Ascending aorta (tissue), 2 donors: ENCODE measurements at regions of chr1 and their contacts with region 1.

Region 1: DNA sequence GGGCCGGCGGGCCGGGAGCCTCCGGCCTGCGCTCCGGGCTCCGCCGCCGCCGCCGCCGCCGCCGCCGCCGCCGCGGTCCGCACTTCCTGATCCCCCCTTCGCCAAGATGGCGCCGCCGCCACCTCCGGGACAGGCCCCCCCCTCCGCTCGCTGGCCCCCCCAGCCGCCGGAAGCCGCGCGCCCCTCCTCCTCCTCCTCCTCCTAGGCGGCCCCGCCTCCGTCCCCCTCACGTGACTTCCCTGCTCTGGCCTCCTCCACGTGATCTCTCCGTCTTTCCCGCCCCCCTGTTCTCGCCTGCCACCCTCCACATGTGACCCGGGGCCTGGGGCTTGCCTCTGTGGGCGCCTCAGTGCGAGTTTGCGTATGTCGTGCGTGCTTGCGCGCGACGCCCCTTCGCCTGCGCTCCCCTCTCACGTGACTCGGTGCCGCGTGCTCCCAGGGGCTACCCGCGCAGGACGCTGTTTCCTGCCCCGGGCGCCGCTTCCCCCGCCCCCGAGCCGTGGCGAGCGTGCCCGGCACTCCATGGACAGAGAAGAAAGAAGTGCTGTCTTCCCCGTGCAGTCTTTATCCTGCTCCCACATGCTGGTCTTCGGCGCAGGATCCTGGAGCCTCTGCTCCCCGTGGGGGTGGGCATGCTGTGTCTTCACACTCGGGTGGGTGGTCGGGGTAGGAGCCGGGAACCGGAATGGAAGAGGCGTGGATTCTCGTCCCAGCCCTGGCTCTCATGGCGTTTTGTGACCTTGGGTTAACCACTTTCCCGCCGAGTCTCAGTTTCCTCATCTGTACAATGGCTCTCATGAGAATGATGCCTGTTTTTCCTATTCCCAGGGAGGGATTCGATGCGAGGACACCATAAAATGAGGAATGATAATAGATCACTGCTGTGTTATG is at the start of gene UBE2Q1:
- DNase-seq: peak; percentile 98 to 99
- H3K4me3 ChIP-seq: peak within 1 kb of the TSS; percentile 93 to 97
- H3K27ac ChIP-seq: peak within 1 kb of the TSS; percentile 85 to 88
- H3K4me1 ChIP-seq: peaks cover 5 to 16% of the 10 kb centered on the region in 2 donors
- H3K27me3 ChIP-seq: no peaks in the 10 kb centered on the region
- CTCF ChIP-seq: no peak
- total RNA-seq, gene UBE2Q1: 10.6 TPM

Region 2: DNA sequence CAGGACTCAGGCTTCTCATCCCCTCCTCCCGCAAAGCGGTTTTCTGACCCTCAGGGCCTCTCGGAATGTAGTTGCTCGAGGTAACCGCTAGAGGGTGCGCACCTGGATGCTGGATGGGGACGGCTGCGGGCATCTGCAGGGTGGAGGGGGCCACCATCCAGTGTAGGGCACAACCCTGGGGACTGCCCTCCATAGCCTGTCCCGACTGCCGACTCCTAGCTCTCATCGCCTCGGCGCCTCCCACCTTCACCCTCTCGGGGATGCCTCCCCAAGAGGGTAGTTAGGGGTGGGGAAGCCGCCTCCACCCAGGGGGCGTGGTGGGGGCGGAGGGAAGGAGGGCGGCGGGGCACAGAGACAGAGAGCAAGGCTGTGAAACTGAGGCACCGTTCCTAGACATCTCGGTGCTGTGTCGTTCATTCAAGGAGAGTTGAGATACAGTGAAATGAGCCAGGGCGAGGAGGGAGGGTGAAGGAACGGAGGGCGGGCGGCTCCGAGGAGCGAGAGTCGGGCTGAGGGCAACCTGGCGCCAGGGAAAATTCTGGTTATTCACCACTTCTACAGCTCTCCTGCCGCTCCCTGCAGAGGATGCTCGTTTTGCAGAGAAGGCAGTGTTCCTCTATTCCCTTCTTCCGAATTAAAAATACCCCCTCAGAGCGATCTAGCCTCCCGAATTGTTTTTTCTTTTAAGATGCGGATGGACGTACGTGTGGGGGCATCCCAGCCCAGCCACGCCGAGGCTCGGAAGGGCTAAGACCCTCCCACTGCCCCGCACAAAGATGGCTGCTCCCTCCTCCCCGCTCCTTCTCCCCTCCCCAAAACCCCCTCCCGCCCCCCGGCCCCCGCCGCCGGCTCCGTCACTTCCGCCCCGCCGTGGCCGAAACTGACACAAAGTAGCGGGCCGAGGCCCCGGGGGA is 233.9 kb before region 1 on chr1 and contains the start of gene ATP8B2:
- intact Hi-C with region 1: loop called (anchors 2 kb)
- DNase-seq: peak in 1 of 2 donors; percentile 87
- H3K4me3 ChIP-seq: peak within 1 kb of the TSS; percentile 73 to 89
- H3K27ac ChIP-seq: peak within 1 kb of the TSS; percentile 95 to 97
- H3K4me1 ChIP-seq: peaks cover 12 to 24% of the 10 kb centered on the region in 2 donors
- H3K27me3 ChIP-seq: no peaks in the 10 kb centered on the region
- CTCF ChIP-seq: peak; percentile 89 to 96 (median 96)
- total RNA-seq, gene ATP8B2: 173 TPM

Region 3: GRCh38 chr1:154607609-154608396 is 49.0 kb after region 1 on chr1 and contains the start of gene ADAR:
- intact Hi-C with region 1: loop called (anchors 1 kb)
- DNase-seq: peak; percentile 68 to 97
- H3K4me3 ChIP-seq: peak within 1 kb of the TSS; percentile 73 to 95
- H3K27ac ChIP-seq: peak within 1 kb of the TSS; percentile 96
- H3K4me1 ChIP-seq: peaks cover 0 to 24% of the 10 kb centered on the region in 2 donors
- H3K27me3 ChIP-seq: no peaks in the 10 kb centered on the region
- CTCF ChIP-seq: no peak
- total RNA-seq, gene ADAR: 65.3 TPM

Region 4: DNA sequence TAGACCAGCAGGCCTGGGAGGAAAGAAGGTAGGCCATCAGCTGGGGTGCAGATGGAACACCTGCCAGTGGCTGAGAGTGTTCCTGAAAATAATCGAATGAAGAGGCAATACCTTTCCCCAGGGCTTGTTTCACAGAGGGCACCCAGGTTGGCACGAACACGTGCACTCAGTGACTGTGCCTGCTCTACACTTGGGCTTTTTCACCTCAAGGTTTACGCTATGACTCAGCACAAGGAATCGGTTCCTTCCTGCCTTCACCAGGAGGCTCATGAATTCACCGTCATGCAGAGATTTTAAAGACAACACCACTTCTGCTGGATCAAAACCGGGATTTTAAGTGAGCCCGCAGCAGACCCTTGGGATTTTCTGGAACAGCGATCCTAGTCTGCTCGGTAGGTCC is 167.6 kb after region 1 on chr1:
- intact Hi-C with region 1: no loop called
- DNase-seq: no peak
- H3K4me3 ChIP-seq: peak overlapping the region in 1 of 2 donors; percentile 12
- H3K27ac ChIP-seq: no peak overlapping the region
- H3K4me1 ChIP-seq: peaks cover 0 to 10% of the 10 kb centered on the region in 2 donors
- H3K27me3 ChIP-seq: no peaks in the 10 kb centered on the region
- CTCF ChIP-seq: no peak

Region 5: GRCh38 chr1:154870115-154870571 is 311.3 kb after region 1 on chr1 and contains the start of gene KCNN3:
- intact Hi-C with region 1: loop called (anchors 2 kb)
- DNase-seq: peak; percentile 72 to 96
- H3K4me3 ChIP-seq: peak within 1 kb of the TSS; percentile 35 to 64
- H3K27ac ChIP-seq: no peak within 1 kb of the TSS
- H3K4me1 ChIP-seq: peaks cover 0 to 23% of the 10 kb centered on the region in 2 donors
- H3K27me3 ChIP-seq: no peaks in the 10 kb centered on the region
- CTCF ChIP-seq: no peak
- total RNA-seq, gene KCNN3: 24.6 TPM

Region 6: GRCh38 chr1:155050560-155051341 is 491.9 kb after region 1 on chr1 and contains the start of gene ADAM15:
- intact Hi-C with region 1: loop called (anchors 5 kb)
- DNase-seq: peak in 1 of 2 donors; percentile 90
- H3K4me3 ChIP-seq: peak within 1 kb of the TSS; percentile 69 to 80
- H3K27ac ChIP-seq: peak within 1 kb of the TSS; percentile 83 to 86
- H3K4me1 ChIP-seq: peaks cover 0 to 20% of the 10 kb centered on the region in 2 donors
- H3K27me3 ChIP-seq: no peaks in the 10 kb centered on the region
- CTCF ChIP-seq: peak; percentile 87 to 97 (median 88)
- total RNA-seq, gene ADAM15: 610 TPM